H1 (cell line): ENCODE measurements at regions of chr7 and their contacts with region 1.

Region 1: DNA sequence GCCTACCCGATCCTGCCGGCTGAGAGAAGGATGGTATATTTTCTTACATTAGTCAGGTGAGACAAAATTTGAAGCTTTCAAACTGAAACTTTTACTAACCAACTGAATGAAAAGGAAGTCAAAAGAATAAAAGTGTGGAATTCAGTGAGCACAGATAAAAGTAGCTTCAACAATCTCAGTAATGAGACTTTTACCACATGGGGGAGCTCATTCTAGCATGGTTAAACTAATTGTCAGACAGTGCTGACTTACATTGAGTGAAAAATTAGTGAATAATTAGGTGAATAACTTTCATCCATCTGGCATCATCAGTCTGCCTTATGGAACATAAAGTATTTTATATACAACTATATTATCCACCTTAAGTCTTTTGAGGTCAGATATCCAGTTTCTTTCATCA is 8.4 kb downstream of the FAM237B start:
- DNase-seq: no peak
- H3K4me3 ChIP-seq: no peak overlapping the region
- H3K27ac ChIP-seq: no peak overlapping the region
- H3K4me1 ChIP-seq: no peaks in the 10 kb centered on the region
- H3K27me3 ChIP-seq: no peaks in the 10 kb centered on the region
- CTCF ChIP-seq: no peak; a peak in 1 of 4 replicates
- EP300 ChIP-seq: no peak
- POLR2A ChIP-seq: no peak
- RAD21 ChIP-seq: peak in 1 of 2 experiments; percentile 34; a peak in 3 of 4 replicates

Region 2: DNA sequence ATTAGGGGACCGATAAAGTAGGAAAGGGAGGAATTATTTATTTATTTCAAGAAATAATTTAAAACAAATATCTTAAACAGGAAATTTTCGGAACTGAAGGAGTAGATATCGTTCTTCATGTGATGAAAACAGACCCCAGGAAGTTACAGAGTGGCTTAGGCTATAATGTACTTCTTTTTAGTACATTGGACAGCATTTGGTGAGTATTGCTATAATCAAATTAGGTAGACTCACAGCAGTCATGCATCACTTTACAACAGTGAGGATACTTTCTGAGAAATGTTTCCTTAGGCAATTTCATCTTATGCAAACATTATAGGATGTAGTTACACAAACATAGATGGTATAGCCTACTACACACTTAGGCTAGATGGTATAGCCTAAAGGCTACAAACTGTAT is 24.6 kb before region 1 on chr7:
- CTCF ChIA-PET with region 1: no interaction called
- POLR2A ChIA-PET with region 1: no interaction called
- DNase-seq: no peak
- H3K4me3 ChIP-seq: no peak overlapping the region
- H3K27ac ChIP-seq: no peak overlapping the region
- H3K4me1 ChIP-seq: no peaks in the 10 kb centered on the region
- H3K27me3 ChIP-seq: no peaks in the 10 kb centered on the region
- CTCF ChIP-seq: no peak
- EP300 ChIP-seq: no peak
- POLR2A ChIP-seq: no peak
- RAD21 ChIP-seq: no peak

Region 3: GRCh38 chr7:90298145-90299038 is 14.4 kb before region 1 on chr7:
- CTCF ChIA-PET with region 1: interaction called, 12 read pairs
- POLR2A ChIA-PET with region 1: no interaction called
- DNase-seq: no peak
- H3K4me3 ChIP-seq: no peak overlapping the region
- H3K27ac ChIP-seq: no peak overlapping the region
- H3K4me1 ChIP-seq: no peaks in the 10 kb centered on the region
- H3K27me3 ChIP-seq: no peaks in the 10 kb centered on the region
- CTCF ChIP-seq: peak in 2 of 3 experiments; percentile 57 to 75; a peak in 3 of 4 replicates
- EP300 ChIP-seq: no peak
- POLR2A ChIP-seq: no peak
- RAD21 ChIP-seq: peak; percentile 65 to 75

Region 4: GRCh38 chr7:90412458-90413184 is 99.9 kb after region 1 on chr7:
- CTCF ChIA-PET with region 1: interaction called, 12 read pairs
- POLR2A ChIA-PET with region 1: no interaction called
- DNase-seq: peak in 1 of 2 experiments; percentile 57
- H3K4me3 ChIP-seq: no peak overlapping the region
- H3K27ac ChIP-seq: no peak overlapping the region; the same call in none of the 2 replicates
- H3K4me1 ChIP-seq: no peaks in the 10 kb centered on the region
- H3K27me3 ChIP-seq: no peaks in the 10 kb centered on the region
- CTCF ChIP-seq: peak; percentile 57 to 79 (median 70)
- EP300 ChIP-seq: no peak
- POLR2A ChIP-seq: no peak
- RAD21 ChIP-seq: peak; percentile 60 to 68

Region 5: DNA sequence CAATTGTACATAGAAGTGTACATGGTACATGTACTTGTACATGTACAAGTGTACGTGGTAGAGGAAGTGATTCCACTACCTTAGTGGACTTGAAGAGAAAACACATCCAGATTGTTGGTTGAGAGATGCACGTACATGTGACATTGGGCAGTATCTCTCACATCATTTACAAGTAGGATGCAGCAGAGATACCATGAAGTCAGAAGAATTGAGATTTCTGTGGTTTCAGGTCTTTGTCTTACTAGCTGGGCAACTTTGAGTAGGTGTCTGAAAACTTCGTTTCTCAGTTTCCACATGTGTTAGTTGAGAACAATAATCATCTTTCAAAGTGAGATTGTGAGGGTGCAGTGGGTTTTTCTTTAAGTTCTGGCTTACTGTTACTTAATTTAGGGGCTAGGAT is 112.0 kb after region 1 on chr7:
- CTCF ChIA-PET with region 1: interaction called, 32 read pairs
- POLR2A ChIA-PET with region 1: no interaction called
- DNase-seq: no peak
- H3K4me3 ChIP-seq: no peak overlapping the region
- H3K27ac ChIP-seq: no peak overlapping the region
- H3K4me1 ChIP-seq: no peaks in the 10 kb centered on the region
- H3K27me3 ChIP-seq: no peaks in the 10 kb centered on the region
- CTCF ChIP-seq: no peak
- EP300 ChIP-seq: no peak
- POLR2A ChIP-seq: no peak
- RAD21 ChIP-seq: no peak